CD4-positive, alpha-beta T cell (primary cell): ENCODE measurements at regions of chr2 and their contacts with region 1.

Region 1: DNA sequence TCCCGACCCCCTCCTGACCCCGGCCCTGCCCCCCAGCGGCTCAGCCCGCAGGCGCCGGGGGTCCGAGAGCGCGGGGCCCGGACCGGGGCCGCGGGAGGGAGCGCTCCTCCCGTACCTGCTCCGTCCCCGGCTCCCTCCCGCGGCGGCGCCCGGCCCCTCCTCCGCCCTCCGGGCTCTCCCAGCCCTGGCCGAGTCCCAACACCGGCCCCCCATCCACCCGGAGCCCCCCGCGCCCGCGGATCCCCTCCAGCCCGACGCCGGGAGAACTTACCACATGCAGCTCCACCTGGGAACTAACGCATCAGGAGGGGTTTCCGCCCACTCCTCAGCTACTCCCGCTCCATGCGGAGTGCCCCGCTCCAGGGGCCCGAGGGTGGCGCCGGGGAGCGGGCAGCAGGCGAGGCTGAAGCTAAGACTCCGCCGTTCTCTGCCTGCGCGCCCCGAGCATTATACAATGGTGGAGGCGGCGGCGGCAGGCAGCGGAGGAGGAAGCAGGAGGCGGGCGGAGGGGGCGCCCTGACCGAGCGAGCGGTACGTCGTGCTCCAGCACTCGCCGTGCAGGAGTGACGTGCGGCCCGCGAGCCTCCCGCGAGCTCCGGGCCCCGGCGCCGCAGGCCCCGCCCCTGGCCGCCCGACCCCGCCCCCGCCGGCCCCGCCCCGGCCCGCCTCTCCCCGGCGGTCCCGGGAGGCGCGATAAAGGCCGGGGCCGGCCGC is at the start of gene SERTAD2:
- DNase-seq: peak; percentile 73 to 96 (median 86)
- ATAC-seq: peak; percentile 87
- H3K4me3 ChIP-seq: peak within 1 kb of the TSS; percentile 91
- H3K4me3 Mint-ChIP-seq: peak within 1 kb of the TSS; percentile 94
- H3K27ac ChIP-seq: peak within 1 kb of the TSS; percentile 82 to 94
- H3K27ac Mint-ChIP-seq: peak within 1 kb of the TSS; percentile 91
- H3K4me1 ChIP-seq: peaks cover 38% of the 10 kb centered on the region
- H3K4me1 Mint-ChIP-seq: peaks cover 84% of the 10 kb centered on the region
- H3K27me3 ChIP-seq: no peaks in the 10 kb centered on the region
- H3K27me3 Mint-ChIP-seq: no peaks in the 10 kb centered on the region
- CTCF ChIP-seq: peak; percentile 27
- total RNA-seq, gene SERTAD2: 50.5 to 54.1 TPM

Region 2: GRCh38 chr2:64426183-64426952 is 227.1 kb before region 1 on chr2:
- CTCF ChIA-PET with region 1: no interaction called
- POLR2A ChIA-PET with region 1: no interaction called
- intact Hi-C with region 1: no loop called
- DNase-seq: no peak
- ATAC-seq: no peak
- H3K4me3 ChIP-seq: no peak overlapping the region
- H3K4me3 Mint-ChIP-seq: no peak overlapping the region
- H3K27ac ChIP-seq: no peak overlapping the region
- H3K27ac Mint-ChIP-seq: no peak overlapping the region
- H3K4me1 ChIP-seq: no peaks in the 10 kb centered on the region
- H3K4me1 Mint-ChIP-seq: no peaks in the 10 kb centered on the region
- H3K27me3 ChIP-seq: no peaks in the 10 kb centered on the region
- H3K27me3 Mint-ChIP-seq: no peaks in the 10 kb centered on the region
- CTCF ChIP-seq: no peak

Region 3: DNA sequence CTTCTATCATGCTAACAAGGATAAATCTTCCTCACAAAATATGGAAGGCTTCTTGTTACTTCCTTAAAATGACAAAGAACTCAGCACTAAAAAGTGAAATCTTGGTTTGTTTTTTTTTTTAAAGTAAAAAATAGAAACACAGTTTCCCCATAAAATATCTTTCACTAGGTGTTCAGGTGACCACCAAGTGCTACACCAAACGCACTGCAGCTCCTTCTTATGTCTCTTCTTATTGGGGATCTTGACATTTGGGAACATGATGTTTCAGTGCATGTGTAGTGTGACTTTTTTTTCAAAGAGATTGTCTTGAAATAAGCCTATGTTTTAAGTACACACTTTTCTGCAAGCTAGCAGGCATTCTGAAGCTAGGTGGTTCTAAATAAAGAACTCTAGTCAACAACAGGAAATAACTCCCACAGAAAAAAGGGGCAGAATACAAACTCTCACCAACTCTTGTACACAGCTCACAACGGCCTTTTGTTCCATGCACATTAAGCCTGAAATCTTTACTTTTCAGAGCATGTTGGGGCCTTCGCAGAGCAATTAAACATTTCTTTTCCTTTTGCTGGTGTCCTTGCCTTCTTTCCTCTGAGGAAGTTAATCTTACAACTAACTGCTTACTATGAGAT is 13.4 kb after region 1 on chr2:
- CTCF ChIA-PET with region 1: interaction called, 11 read pairs
- POLR2A ChIA-PET with region 1: interaction called, 243 read pairs
- intact Hi-C with region 1: no loop called
- DNase-seq: peak in 1 of 14 experiments; percentile 40
- ATAC-seq: peak; percentile 73
- H3K4me3 ChIP-seq: no peak overlapping the region
- H3K4me3 Mint-ChIP-seq: peak overlapping the region; percentile 60
- H3K27ac ChIP-seq: peak overlapping the region; percentile 43 to 51
- H3K27ac Mint-ChIP-seq: no peak overlapping the region
- H3K4me1 ChIP-seq: peaks cover 37% of the 10 kb centered on the region
- H3K4me1 Mint-ChIP-seq: peaks cover 32% of the 10 kb centered on the region
- H3K27me3 ChIP-seq: no peaks in the 10 kb centered on the region
- H3K27me3 Mint-ChIP-seq: no peaks in the 10 kb centered on the region
- CTCF ChIP-seq: no peak

Region 4: GRCh38 chr2:64730551-64731262 is 77.2 kb after region 1 on chr2:
- CTCF ChIA-PET with region 1: interaction called, 5 read pairs
- POLR2A ChIA-PET with region 1: interaction called, 45 read pairs
- intact Hi-C with region 1: loop called (anchors 2 to 5 kb)
- DNase-seq: peak; percentile 12 to 77 (median 36)
- ATAC-seq: peak; percentile 78
- H3K4me3 ChIP-seq: peak overlapping the region; percentile 63
- H3K4me3 Mint-ChIP-seq: peak overlapping the region; percentile 88
- H3K27ac ChIP-seq: peak overlapping the region; percentile 71 to 86
- H3K27ac Mint-ChIP-seq: peak overlapping the region; percentile 98
- H3K4me1 ChIP-seq: peaks cover 22% of the 10 kb centered on the region
- H3K4me1 Mint-ChIP-seq: peaks cover 67% of the 10 kb centered on the region
- H3K27me3 ChIP-seq: no peaks in the 10 kb centered on the region
- H3K27me3 Mint-ChIP-seq: no peaks in the 10 kb centered on the region
- CTCF ChIP-seq: no peak

Region 5: DNA sequence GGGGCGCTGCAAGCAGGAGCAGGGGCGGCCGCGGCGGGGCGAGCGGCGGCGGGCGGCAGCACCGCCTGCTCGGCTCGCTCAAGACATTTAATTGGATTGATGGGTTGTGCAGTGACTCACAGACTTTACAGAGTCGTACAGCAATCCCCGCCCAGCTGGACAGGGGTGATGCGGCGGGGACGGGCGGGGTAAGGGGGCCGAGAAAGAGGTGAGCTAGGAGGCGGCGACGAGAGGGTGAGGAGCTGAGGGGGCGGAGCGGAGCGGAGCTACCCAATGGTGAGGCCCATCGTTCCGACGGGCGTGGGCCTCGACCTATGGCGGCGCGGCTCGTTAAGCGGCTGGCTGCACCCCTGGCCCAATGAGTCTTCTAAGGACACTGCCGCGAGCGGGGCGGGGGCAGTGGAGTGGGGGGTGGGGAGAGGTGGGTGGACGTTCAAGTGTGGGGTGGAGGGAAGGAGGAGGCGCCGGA is 97.3 kb after region 1 on chr2:
- CTCF ChIA-PET with region 1: interaction called, 35 read pairs
- POLR2A ChIA-PET with region 1: interaction called, 395 read pairs
- intact Hi-C with region 1: loop called (anchors 1 kb)
- DNase-seq: peak; percentile 92 to 100 (median 96)
- ATAC-seq: peak; percentile 83
- H3K4me3 ChIP-seq: peak overlapping the region; percentile 96
- H3K4me3 Mint-ChIP-seq: peak overlapping the region; percentile 95
- H3K27ac ChIP-seq: peak overlapping the region; percentile 81 to 91
- H3K27ac Mint-ChIP-seq: peak overlapping the region; percentile 92
- H3K4me1 ChIP-seq: peaks cover 16% of the 10 kb centered on the region
- H3K4me1 Mint-ChIP-seq: peaks cover 34% of the 10 kb centered on the region
- H3K27me3 ChIP-seq: no peaks in the 10 kb centered on the region
- H3K27me3 Mint-ChIP-seq: no peaks in the 10 kb centered on the region
- CTCF ChIP-seq: no peak

Region 6: GRCh38 chr2:64831134-64831976 is 177.8 kb after region 1 on chr2:
- CTCF ChIA-PET with region 1: interaction called, 9 read pairs
- POLR2A ChIA-PET with region 1: interaction called, 20 read pairs
- intact Hi-C with region 1: no loop called
- DNase-seq: peak; percentile 66 to 93 (median 77)
- ATAC-seq: peak; percentile 87
- H3K4me3 ChIP-seq: peak overlapping the region; percentile 35
- H3K4me3 Mint-ChIP-seq: no peak overlapping the region
- H3K27ac ChIP-seq: no peak overlapping the region
- H3K27ac Mint-ChIP-seq: no peak overlapping the region
- H3K4me1 ChIP-seq: peaks cover 13% of the 10 kb centered on the region
- H3K4me1 Mint-ChIP-seq: peaks cover 5% of the 10 kb centered on the region
- H3K27me3 ChIP-seq: no peaks in the 10 kb centered on the region
- H3K27me3 Mint-ChIP-seq: no peaks in the 10 kb centered on the region
- CTCF ChIP-seq: peak; percentile 93

Region 7: GRCh38 chr2:65227425-65228262 is 574.1 kb after region 1 on chr2 and contains the start of gene ACTR2:
- CTCF ChIA-PET with region 1: no interaction called
- POLR2A ChIA-PET with region 1: interaction called, 13 read pairs
- intact Hi-C with region 1: no loop called
- DNase-seq: peak; percentile 87 to 98 (median 92)
- ATAC-seq: peak; percentile 93
- H3K4me3 ChIP-seq: peak within 1 kb of the TSS; percentile 76
- H3K4me3 Mint-ChIP-seq: peak within 1 kb of the TSS; percentile 100
- H3K27ac ChIP-seq: peak within 1 kb of the TSS; percentile 97 to 98
- H3K27ac Mint-ChIP-seq: peak within 1 kb of the TSS; percentile 98
- H3K4me1 ChIP-seq: peaks cover 35% of the 10 kb centered on the region
- H3K4me1 Mint-ChIP-seq: peaks cover 53% of the 10 kb centered on the region
- H3K27me3 ChIP-seq: no peaks in the 10 kb centered on the region
- H3K27me3 Mint-ChIP-seq: no peaks in the 10 kb centered on the region
- CTCF ChIP-seq: no peak
- total RNA-seq, gene ACTR2: 128 to 130 TPM